ENCODE measurements at regions of chr16 and their contacts with region 1.

Region 1: GRCh38 chr16:1991948-1992703 is 2.4 kb downstream of the SYNGR3 start:
- DNase-seq: peak; percentile 90 to 96 (median 95)
- H3K4me3 ChIP-seq: peak overlapping the region in 1 of 3 experiments; percentile 57
- H3K4me3 Mint-ChIP-seq: peak overlapping the region; percentile 57 to 64
- H3K27ac ChIP-seq: peak overlapping the region in 1 of 2 donors; percentile 26
- H3K27ac Mint-ChIP-seq: no peak overlapping the region
- H3K4me1 ChIP-seq: peaks cover 18% of the 10 kb centered on the region in 2 donors
- H3K4me1 Mint-ChIP-seq: peaks cover 14% of the 10 kb centered on the region
- H3K27me3 ChIP-seq: peaks cover 20 to 33% of the 10 kb centered on the region in 2 donors
- H3K27me3 Mint-ChIP-seq: peaks cover 35 to 52% (median 42%) of the 10 kb centered on the region in 3 donors
- CTCF ChIP-seq: no peak

Region 2: GRCh38 chr16:1812732-1813163 is 179.4 kb before region 1 on chr16:
- intact Hi-C with region 1: no loop called
- DNase-seq: peak in 2 of 3 donors; percentile 16 to 21
- H3K4me3 ChIP-seq: no peak overlapping the region
- H3K4me3 Mint-ChIP-seq: no peak overlapping the region
- H3K27ac ChIP-seq: no peak overlapping the region
- H3K27ac Mint-ChIP-seq: peak overlapping the region in 2 of 7 donors; percentile 17 to 25
- H3K4me1 ChIP-seq: no peaks in the 10 kb centered on the region
- H3K4me1 Mint-ChIP-seq: no peaks in the 10 kb centered on the region
- H3K27me3 ChIP-seq: no peaks in the 10 kb centered on the region
- H3K27me3 Mint-ChIP-seq: no peaks in the 10 kb centered on the region
- CTCF ChIP-seq: no peak

Region 3: DNA sequence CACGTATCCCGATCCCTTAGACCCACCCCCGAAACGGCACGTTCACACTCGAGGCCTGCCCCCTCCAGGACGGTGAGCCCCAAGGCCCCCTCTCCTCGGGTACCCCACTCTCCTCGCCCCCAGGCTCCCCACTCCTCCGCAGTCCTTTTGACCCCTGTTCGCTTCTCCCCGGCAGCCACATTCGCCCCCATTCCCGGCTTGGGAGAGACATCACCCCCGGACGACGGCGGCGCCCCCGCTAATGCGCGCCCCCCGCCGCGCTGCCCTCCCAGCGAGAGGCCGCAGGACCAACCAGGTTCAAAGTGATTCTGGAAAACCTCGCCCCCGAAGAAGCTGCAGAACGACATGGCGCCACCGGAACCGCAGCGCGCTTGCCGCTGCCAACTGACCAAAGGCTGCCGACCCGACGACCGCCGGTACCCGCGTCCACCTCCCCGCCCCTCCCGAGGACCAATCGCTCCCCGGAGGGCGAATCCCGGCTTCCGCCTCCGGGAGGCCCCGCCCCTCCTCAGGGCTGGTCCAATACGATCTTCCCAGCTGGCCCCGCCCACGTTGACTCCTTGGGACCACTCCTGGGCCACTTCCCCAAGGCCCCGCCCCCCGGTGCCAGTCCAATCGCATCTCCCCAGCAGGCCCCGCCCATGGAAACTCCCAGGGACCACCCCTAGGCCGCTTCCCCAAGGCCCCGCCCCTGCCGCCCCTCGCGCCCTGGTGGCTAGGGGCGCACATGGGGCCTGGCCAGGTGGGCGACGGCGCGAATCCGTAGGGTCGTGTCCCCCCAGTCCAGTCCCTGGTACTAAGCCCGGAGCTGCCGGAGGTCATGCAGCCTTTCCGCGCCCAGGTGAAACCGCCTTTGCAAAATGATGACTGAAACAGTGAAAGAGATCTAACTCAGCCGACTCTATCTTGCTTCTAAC is 49.1 kb before region 1 on chr16 and contains the start of gene MSRB1:
- intact Hi-C with region 1: loop called in 1 of 2 experiments (anchors 2 kb)
- DNase-seq: peak; percentile 98 to 99 (median 98)
- H3K4me3 ChIP-seq: peak within 1 kb of the TSS; percentile 86 to 99 (median 92)
- H3K4me3 Mint-ChIP-seq: peak within 1 kb of the TSS; percentile 89 to 91
- H3K27ac ChIP-seq: peak within 1 kb of the TSS; percentile 83
- H3K27ac Mint-ChIP-seq: peak within 1 kb of the TSS; percentile 85 to 95 (median 94)
- H3K4me1 ChIP-seq: peaks cover 53 to 60% of the 10 kb centered on the region in 2 donors
- H3K4me1 Mint-ChIP-seq: peaks cover 51% of the 10 kb centered on the region
- H3K27me3 ChIP-seq: no peaks in the 10 kb centered on the region
- H3K27me3 Mint-ChIP-seq: peaks cover 0 to 3% (median 2%) of the 10 kb centered on the region in 3 donors
- CTCF ChIP-seq: no peak
- polyA plus RNA-seq, gene MSRB1: 116 to 427 (median 416) TPM

Region 4: DNA sequence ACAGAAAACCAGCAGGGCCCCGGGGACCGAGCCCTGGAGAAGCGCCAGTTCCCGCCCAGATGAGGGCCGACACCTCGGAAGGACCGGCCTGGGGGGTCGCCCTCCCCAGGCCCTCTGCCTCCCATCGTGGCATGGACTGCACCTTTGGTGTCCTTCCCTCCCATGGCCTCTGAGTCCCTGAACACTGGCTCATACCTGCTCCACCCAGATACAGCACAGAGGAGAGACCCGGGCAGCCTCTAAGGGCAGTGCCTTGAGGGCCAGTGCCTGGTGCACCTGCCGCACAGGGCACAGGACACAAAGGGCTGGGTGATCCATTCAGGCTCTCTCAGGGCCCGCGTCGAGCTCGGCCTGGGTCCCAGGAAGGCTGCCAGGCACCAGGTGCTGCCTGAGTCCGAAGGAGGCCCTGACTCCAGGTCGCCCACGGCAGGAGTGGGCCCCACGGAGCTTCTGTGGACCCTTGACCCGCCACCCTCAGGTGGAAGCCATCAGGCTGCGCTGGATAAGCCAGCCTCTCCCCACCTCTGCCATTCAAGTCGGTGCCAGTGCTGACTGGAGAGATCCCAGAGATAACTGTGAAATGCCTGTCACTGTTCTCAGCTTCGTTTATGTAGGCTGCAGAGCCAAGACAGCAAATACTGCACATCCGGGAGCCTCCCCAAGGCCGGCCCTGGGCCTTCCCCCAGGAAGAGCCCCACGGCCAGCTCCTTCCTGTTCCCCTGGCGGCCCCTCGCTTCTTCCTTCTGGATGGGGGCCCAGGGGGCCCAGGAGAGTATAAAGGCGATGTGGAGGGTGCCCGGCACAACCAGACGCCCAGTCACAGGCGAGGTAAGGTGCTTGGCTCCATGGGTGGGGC is 837.6 kb after region 1 on chr16 and contains the start of gene ZG16B:
- intact Hi-C with region 1: no loop called
- DNase-seq: no peak
- H3K4me3 ChIP-seq: peak within 1 kb of the TSS in 1 of 3 experiments; percentile 42
- H3K4me3 Mint-ChIP-seq: peak within 1 kb of the TSS; percentile 50 to 71
- H3K27ac ChIP-seq: peak within 1 kb of the TSS; percentile 6 to 64
- H3K27ac Mint-ChIP-seq: peak within 1 kb of the TSS in 2 of 7 donors; percentile 30 to 55
- H3K4me1 ChIP-seq: peaks cover 14 to 18% of the 10 kb centered on the region in 2 donors
- H3K4me1 Mint-ChIP-seq: peaks cover 12% of the 10 kb centered on the region
- H3K27me3 ChIP-seq: no peaks in the 10 kb centered on the region
- H3K27me3 Mint-ChIP-seq: peaks cover under 1 to 8% (median 4%) of the 10 kb centered on the region in 3 donors
- CTCF ChIP-seq: no peak
- polyA plus RNA-seq, gene ZG16B: 6.8 to 12.9 (median 11.0) TPM